Dendritic cell treated with granulocyte-macrophage colony-stimulating factor and Interleukin-4, amounts not matched to agents 40 ng/mL and 50 ng/mL, for 4 days (primary cell): ENCODE measurements at regions of chr9 and their contacts with region 1.

Region 1: DNA sequence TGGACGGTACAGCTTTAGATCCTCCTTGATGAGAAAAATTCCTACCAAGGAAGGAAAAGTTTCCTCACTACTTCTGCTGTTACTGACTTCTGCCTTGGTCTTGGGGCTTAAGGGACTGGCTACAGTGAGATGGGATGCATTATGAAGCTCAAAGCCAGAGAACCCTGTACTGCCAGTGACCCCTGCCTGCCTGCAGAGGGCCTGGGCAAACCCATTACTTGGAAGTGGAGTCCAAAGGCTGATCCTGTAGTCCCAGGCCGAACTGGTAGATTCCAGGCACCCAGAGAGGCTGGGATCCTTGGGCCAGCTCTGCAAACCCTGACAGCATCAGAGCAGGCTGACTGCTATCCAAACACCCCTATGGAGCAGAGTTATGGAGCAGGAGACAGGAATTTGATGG is 25.7 kb upstream of the NR5A1 start:
- H3K4me3 Mint-ChIP-seq: no peak overlapping the region
- H3K27ac Mint-ChIP-seq: no peak overlapping the region
- H3K4me1 Mint-ChIP-seq: no peaks in the 10 kb centered on the region
- H3K27me3 Mint-ChIP-seq: no peaks in the 10 kb centered on the region

Region 2: DNA sequence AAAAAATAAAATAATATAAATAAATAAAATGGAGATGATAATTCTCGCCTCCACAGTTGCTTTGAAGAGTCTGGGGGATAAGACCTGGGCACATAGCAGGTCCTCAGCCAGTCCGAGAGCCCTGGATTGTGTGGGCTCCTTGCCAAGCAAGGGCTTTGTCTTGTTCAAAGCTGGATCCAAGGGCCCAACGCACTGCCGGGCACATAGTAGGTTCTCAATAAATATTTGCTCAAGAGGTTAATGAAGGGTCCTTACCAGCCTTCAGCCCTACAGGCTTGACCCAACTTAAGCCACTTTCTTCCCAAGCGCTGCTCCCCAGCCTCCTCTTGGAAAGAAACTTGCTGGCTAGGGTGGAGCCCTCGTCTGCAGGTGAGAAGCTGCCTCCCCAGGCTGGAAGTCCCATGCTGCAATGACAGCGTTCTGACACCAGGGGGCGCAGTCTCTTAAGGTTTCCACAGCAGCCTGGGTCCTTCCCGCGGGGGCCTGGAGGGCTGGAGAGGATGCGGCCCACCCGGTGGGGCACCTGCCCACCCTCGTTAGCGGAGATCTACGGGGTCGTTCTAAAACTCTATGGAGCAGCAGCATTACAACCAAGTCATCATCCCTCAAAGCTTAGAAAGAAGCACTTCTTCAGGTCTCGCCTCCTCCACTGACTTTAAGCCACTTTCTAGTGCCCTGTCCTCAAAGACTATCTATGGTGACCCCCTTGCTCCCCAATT is 406.2 kb before region 1 on chr9:
- intact Hi-C with region 1: loop called (anchors 10 kb)
- H3K4me3 Mint-ChIP-seq: no peak overlapping the region
- H3K27ac Mint-ChIP-seq: no peak overlapping the region
- H3K4me1 Mint-ChIP-seq: peaks cover 24% of the 10 kb centered on the region
- H3K27me3 Mint-ChIP-seq: peaks cover 4% of the 10 kb centered on the region

Region 3: GRCh38 chr9:124419832-124420489 is 112.9 kb before region 1 on chr9:
- intact Hi-C with region 1: loop called (anchors 1 kb)
- H3K4me3 Mint-ChIP-seq: no peak overlapping the region
- H3K27ac Mint-ChIP-seq: no peak overlapping the region
- H3K4me1 Mint-ChIP-seq: no peaks in the 10 kb centered on the region
- H3K27me3 Mint-ChIP-seq: peaks cover 14% of the 10 kb centered on the region